ENCODE measurements at regions of chr7 and their contacts with region 1.

Region 1: DNA sequence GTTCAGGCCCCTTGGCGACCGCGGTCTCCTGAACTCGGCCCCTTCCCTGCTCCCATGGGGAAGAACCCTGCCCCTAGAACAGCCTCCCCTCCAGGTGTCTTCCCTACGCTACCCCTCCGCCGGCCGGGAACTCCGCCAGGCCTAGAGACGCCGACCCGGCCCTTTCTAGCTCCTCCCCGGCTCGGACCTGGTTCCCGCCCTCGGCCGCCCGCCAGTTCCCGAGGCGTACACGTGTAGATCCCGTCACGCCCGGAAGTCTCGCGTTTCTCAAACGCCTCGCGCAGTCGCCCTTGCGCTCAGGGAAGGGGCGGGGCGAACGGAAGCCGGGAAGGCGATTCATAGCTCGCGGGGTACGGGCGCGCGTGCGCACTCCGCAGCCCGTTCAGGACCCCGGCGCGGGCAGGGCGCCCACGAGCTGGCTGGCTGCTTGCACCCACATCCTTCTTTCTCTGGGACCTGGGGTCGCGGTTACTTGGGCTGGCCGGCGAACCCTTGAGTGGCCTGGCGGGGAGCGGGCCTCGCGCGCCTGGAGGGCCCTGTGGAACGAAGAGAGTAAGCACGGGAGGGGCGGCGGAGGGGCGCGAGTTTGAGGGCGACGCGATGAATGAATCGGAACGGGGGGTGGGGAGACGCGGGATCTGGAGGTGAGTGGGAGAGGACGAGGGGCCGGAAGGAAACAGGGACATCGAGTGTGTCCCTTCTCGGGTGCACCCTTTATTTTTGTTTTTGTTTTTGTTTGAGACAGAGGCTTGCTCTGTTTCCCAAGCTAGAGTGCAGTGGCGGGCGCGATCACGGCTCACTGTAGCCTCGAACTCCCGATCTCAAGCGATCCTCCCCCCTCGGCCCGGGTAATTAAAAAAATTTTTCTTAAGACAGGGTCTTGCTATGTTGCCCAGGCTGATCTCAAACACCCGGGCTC is at the start of gene POP7:
- DNase-seq: peak; percentile 99
- CTCF ChIP-seq: no peak

Region 2: DNA sequence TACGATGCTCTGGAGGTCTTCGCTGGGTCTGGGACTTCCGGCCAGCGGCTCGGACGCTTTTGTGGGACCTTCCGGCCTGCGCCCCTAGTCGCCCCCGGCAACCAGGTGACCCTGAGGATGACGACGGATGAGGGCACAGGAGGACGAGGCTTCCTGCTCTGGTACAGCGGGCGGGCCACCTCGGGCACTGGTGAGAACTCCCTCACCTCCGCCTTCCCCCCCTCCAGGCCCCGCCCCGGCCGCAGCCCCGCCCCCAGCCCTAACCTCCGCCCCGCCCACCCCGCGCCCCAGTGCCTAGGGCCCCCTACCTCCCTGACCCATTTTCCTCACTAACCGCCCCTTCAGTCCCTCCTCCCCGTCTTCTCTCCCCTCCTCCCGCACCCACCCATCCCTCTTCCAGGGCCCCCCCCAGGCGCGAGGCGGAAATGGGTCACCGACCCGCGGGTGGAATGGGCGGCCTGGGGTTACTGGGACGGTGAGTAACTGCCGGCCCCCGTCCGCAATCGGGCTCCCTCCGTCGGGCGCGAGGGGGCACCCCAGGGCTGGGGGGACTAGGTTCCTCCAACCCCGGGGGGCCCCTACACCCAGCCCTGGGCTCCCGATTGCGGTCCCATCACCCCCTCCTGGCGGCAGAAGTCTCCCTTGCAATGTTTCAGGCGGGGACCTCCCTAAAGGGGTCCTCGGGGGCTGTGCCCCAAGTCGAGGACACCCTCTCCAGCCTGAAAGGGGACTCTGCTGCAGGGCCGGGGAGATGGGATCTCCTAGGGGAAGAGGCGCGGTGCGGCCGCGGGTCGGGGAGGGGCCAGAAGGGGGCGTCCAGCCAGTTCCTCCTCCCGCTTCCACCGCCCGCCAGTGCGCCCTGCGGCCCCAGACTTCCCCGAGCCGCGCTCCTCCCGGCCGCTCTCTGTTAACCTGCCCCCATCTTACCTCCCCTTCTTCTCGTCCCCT is 101.7 kb before region 1 on chr7:
- CTCF ChIA-PET with region 1: interaction called, 11 read pairs
- POLR2A ChIA-PET with region 1: no interaction called
- DNase-seq: peak; percentile 91
- CTCF ChIP-seq: peak; percentile 42

Region 3: GRCh38 chr7:100626530-100627237 is 79.3 kb before region 1 on chr7:
- CTCF ChIA-PET with region 1: interaction called, 10 read pairs
- POLR2A ChIA-PET with region 1: no interaction called
- DNase-seq: peak; percentile 97
- CTCF ChIP-seq: no peak

Region 4: GRCh38 chr7:100682228-100682741 is 23.7 kb before region 1 on chr7:
- CTCF ChIA-PET with region 1: interaction called, 16 read pairs
- POLR2A ChIA-PET with region 1: no interaction called
- DNase-seq: no peak
- CTCF ChIP-seq: no peak

Region 5: DNA sequence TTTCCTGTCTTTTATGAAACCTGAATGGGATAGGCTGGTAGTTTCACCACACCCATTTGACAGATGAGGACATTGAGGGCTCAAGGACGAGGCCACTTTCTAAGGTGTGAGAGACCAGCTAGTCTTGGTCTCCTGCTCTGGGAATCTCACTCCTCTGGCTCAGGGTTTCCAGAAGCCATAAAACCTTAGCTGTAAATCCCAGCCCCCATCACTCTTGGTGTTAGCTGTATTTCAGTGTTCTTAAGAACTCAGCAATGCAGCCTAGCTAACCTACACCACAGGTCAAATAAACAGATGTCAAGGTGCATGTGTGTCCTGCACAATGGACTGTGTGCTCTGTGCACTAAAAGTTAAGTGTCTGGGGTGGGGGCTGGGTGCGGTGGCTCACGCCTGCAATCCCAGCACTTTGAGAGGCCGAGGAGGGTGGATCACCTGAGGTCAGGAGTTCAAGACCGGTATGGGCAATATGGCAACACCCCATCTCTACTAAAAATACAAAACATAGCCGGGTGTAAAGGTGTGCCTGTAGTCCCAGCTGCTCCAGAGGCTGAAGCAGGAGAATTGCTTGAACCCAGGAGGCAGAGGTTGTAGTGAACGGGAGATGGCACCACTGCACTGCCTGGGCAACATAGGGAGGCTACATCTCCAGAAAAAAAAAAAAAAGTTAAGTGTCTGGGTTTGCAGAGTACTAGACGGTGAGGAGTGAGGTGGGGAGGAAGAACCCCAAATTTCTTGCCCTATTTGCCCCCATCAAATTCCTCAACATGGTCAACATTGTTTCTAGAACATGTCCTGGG is 13.7 kb after region 1 on chr7:
- CTCF ChIA-PET with region 1: interaction called, 100 read pairs
- POLR2A ChIA-PET with region 1: no interaction called
- DNase-seq: no peak
- CTCF ChIP-seq: no peak

Region 6: DNA sequence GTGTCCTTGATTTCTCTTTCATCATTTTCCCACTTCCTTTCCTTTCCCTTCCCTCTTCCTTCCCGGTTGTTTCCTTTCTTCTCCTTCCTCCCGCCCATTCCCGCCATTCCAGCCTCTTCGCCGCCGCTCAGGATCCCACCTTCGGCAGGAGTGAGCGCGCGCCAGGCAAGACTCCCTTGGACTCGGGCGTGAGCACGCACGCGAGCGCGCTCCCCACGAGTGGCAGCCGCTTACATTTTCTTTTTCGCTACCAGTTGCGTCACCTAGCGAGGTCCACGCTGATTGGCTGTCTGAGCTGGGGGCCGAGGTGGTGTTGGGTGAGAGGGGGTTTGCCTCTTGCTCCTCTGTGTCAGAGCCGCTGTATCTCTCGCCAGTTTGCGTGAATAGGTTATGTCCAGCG is 39.2 kb after region 1 on chr7:
- CTCF ChIA-PET with region 1: interaction called, 12 read pairs
- POLR2A ChIA-PET with region 1: interaction called, 5 read pairs
- DNase-seq: peak; percentile 78
- CTCF ChIP-seq: no peak